A673 (cell line): ENCODE measurements at regions of chr20 and their contacts with region 1.

Region 1: DNA sequence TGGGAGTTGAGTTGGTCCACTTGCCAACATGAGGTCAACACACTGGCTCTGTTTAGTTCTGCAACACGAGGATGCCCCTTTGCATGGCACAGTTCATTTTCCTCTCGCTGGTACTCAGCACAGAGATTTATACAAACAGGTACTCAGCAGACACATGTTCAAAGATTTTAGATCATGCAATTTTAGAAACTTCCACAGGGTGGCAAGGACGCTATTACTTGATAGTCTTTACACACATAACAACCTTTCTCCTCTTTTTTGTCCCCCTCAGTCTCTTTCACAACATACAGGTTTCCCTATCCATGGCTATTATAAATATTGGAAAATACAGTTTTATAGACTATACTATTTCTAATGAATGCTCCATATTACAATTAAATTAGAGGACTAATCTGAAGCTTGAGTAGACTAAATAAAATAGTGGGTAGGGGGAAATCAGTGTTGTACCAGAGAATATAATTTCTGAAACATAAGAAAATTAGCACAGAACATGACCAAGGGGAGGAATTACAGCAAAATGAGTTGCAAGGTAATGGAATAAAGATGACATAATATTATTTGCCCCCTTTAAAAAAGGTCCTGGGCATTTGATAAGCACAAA is 331.8 kb upstream of the BTBD3 start:
- DNase-seq: peak; percentile 43
- H3K4me3 ChIP-seq: no peak overlapping the region
- H3K27ac ChIP-seq: no peak overlapping the region
- H3K4me1 ChIP-seq: no peaks in the 10 kb centered on the region
- H3K27me3 ChIP-seq: peaks cover 15% of the 10 kb centered on the region
- CTCF ChIP-seq: peak; percentile 51; the same call in 1 of the 2 replicates

Region 2: GRCh38 chr20:11522366-11522741 is 63.5 kb before region 1 on chr20:
- CTCF ChIA-PET with region 1: no interaction called
- POLR2A ChIA-PET with region 1: no interaction called
- intact Hi-C with region 1: loop called (anchors 10 kb)
- DNase-seq: no peak
- H3K4me3 ChIP-seq: no peak overlapping the region
- H3K27ac ChIP-seq: no peak overlapping the region
- H3K4me1 ChIP-seq: no peaks in the 10 kb centered on the region
- H3K27me3 ChIP-seq: no peaks in the 10 kb centered on the region
- CTCF ChIP-seq: no peak

Region 3: DNA sequence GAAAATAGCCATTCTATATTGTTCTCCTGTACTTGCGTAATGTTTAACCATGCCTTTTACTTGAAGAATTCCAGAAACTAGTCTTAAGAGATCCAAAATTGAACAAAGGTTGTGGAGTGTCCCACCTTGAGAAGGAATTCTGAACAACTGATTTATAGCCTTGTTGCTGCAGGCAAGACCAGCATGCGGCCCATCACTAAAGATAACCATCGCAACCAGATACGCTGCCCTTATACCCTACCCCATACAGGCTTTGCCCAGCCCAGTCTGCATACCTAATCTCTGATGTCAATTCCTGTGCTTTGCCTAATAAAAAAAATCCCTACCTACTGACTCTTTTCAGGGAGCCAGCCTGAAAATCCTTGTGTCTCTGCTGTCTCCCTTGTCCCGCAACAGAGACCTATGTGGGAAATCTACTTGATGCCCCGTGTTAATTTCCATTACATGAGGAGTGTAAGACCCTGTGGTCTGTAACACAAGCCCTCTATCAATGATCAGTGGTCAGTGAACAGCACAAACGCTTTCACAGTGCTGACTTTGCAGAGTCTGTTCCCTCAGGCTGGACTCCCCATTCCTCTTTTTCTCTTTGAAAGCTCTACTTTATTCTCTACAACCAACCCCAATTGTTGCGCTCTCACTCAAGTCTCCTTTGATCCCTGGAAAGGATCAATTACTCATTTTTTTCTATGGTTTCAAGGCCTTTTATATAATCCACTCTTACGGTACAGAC is 206.2 kb after region 1 on chr20:
- CTCF ChIA-PET with region 1: no interaction called
- POLR2A ChIA-PET with region 1: no interaction called
- intact Hi-C with region 1: no loop called
- DNase-seq: no peak
- H3K4me3 ChIP-seq: no peak overlapping the region
- H3K27ac ChIP-seq: no peak overlapping the region
- H3K4me1 ChIP-seq: no peaks in the 10 kb centered on the region
- H3K27me3 ChIP-seq: no peaks in the 10 kb centered on the region
- CTCF ChIP-seq: no peak